GM12878 (cell line): ENCODE measurements at regions of chr19 and their contacts with region 1.

Region 1: GRCh38 chr19:7340959-7341837 is 7.5 kb upstream of the ARHGEF18 start:
- DNase-seq: peak; percentile 92
- ATAC-seq: peak; percentile 17
- H3K4me3 ChIP-seq: 0 out of 2 replicates have a peak overlapping the region, but pooled peaks have one; percentile 1
- H3K27ac ChIP-seq: peak overlapping the region; percentile 80
- H3K4me1 ChIP-seq: peaks cover 67% of the 10 kb centered on the region
- H3K27me3 ChIP-seq: no peaks in the 10 kb centered on the region
- CTCF ChIP-seq: peak; percentile 91 to 96 (median 95)
- EP300 ChIP-seq: peak in 1 of 2 experiments; percentile 36; a peak in 1 of 4 replicates
- POLR2A ChIP-seq: no peak
- RAD21 ChIP-seq: peak; percentile 100

Region 2: GRCh38 chr19:6862673-6863078 is 478.5 kb before region 1 on chr19:
- CTCF ChIA-PET with region 1: interaction called, 9 read pairs
- POLR2A ChIA-PET with region 1: no interaction called
- RAD21 ChIA-PET with region 1: interaction called, 9 read pairs
- SMC1A ChIA-PET with region 1: no interaction called
- in situ Hi-C with region 1: no loop called
- intact Hi-C with region 1: loop called (anchors 2 kb)
- DNase-seq: peak; percentile 80
- ATAC-seq: peak; percentile 94
- H3K4me3 ChIP-seq: peak overlapping the region; percentile 67; the same call in 1 of the 2 replicates
- H3K27ac ChIP-seq: peak overlapping the region; percentile 56; the same call in 1 of the 2 replicates
- H3K4me1 ChIP-seq: peaks cover 11% of the 10 kb centered on the region
- H3K27me3 ChIP-seq: no peaks in the 10 kb centered on the region
- CTCF ChIP-seq: peak; percentile 92 to 99 (median 99); a peak in 5 of 6 replicates
- EP300 ChIP-seq: no peak
- POLR2A ChIP-seq: peak; percentile 65
- RAD21 ChIP-seq: peak; percentile 88

Region 3: GRCh38 chr19:7145494-7146485 is 195.4 kb before region 1 on chr19:
- CTCF ChIA-PET with region 1: interaction called, 10 read pairs
- POLR2A ChIA-PET with region 1: no interaction called
- RAD21 ChIA-PET with region 1: interaction called, 20 read pairs
- SMC1A ChIA-PET with region 1: interaction called, 18 read pairs
- in situ Hi-C with region 1: loop called (anchors 5 kb)
- intact Hi-C with region 1: loop called (anchors 1 kb)
- DNase-seq: no peak
- ATAC-seq: no peak
- H3K4me3 ChIP-seq: no peak overlapping the region
- H3K27ac ChIP-seq: no peak overlapping the region
- H3K4me1 ChIP-seq: no peaks in the 10 kb centered on the region
- H3K27me3 ChIP-seq: no peaks in the 10 kb centered on the region
- CTCF ChIP-seq: no peak
- EP300 ChIP-seq: no peak
- POLR2A ChIP-seq: no peak
- RAD21 ChIP-seq: no peak

Region 4: DNA sequence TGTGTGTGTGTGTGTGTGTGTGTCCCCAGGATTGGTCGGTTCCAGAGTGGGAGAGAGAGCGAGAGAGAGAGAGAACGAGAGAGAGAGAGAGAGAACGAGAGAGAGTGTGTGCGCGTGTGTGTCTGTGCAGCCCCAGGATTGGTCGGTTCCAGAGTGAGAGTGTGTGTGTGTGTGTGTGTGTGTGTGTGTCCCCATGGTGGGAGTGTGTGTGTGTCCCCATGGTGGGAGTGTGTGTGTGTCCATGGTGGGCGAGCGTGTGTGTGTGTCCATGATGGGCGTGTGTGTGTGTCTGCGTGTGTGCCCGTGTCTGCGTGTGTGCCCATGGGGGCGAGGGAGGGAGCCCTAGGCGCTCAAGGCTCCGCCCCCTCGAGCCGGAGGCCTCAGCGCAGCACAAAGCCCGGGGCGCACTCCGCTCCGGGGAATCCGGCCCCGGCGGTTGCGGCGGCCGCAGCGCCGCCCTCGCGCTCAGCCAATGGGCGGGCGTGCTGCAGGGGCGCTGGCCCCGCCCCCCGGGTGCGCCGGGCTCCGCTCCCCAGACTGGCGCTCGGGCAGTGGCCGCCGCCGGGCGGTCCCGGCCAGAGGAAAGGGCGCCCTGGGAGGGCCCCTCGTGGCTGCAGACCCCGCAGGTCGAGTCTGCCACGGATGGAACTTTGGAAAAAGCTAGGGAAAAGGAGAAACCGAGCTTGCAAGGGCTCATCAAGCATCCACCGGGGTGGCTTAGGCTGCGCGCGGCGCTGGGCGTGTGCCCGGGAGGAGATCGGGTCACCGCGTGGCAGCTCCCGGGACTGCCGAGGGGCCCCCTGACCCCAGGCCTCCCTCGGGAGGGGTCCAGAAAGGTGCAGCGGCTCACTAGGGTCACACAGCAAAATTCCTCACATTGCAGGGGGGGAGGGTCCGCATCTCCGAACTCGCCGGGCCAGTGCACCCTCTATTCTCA is 143.2 kb before region 1 on chr19:
- CTCF ChIA-PET with region 1: interaction called, 4 read pairs
- POLR2A ChIA-PET with region 1: interaction called, 4 read pairs
- RAD21 ChIA-PET with region 1: interaction called, 5 read pairs
- SMC1A ChIA-PET with region 1: interaction called, 7 read pairs
- in situ Hi-C with region 1: no loop called
- intact Hi-C with region 1: loop called (anchors 5 kb)
- DNase-seq: peak; percentile 81
- ATAC-seq: peak; percentile 89
- H3K4me3 ChIP-seq: peak overlapping the region; percentile 70
- H3K27ac ChIP-seq: peak overlapping the region; percentile 75
- H3K4me1 ChIP-seq: peaks cover 17% of the 10 kb centered on the region
- H3K27me3 ChIP-seq: no peaks in the 10 kb centered on the region
- CTCF ChIP-seq: peak in 2 of 3 experiments; percentile 26 to 34; a peak in 2 of 6 replicates
- EP300 ChIP-seq: peak; percentile 16 to 52; a peak in 1 of 4 replicates
- POLR2A ChIP-seq: peak; percentile 80
- RAD21 ChIP-seq: peak; percentile 17; the same call in 1 of the 2 replicates

Region 5: DNA sequence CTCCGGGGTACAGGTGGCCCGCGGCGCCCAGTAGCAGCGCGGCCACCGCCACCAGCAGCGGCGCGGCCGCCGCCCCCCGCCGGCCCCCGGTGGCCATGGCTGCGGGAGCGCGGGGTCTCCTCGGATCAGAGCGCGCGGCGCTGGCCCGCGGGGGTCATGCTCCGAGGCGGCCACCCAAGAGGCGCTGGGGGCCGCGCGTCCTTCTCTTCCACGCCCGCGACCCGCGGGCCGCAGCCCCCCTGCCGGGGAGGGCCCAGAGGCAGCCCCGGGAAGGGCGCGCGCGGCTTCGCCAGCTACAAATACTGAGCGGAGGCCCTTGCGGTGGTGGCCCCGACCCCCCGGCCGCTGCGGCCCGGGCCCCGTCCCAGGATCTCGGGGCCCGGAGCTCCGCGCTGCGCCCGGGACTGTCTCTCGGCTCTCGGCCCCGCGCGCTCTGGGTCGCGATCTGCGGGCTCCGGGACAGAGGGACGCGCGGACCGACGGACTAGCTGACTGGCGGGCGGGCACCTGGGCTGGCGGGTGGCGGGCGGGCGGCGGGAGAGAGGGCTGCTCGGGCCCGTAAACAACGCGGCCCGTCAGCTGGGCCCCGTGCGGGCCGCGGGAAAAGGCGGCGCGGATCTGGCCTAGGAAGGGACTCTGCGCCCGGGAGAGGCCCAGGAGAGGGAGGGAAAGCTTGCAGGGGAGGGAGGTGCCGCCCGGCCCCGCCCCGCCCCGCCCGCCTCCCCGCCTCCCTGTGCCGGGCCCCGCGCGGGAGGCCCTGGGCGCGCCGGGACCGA is 47.2 kb before region 1 on chr19 and contains the start of gene INSR:
- CTCF ChIA-PET with region 1: interaction called, 4 read pairs
- POLR2A ChIA-PET with region 1: interaction called, 5 read pairs
- RAD21 ChIA-PET with region 1: interaction called, 5 read pairs
- SMC1A ChIA-PET with region 1: interaction called, 9 read pairs
- in situ Hi-C with region 1: no loop called
- intact Hi-C with region 1: loop called (anchors 2 kb)
- DNase-seq: peak; percentile 54
- ATAC-seq: peak; percentile 82
- H3K4me3 ChIP-seq: peak within 1 kb of the TSS; percentile 94
- H3K27ac ChIP-seq: peak within 1 kb of the TSS; percentile 74
- H3K4me1 ChIP-seq: peaks cover 13% of the 10 kb centered on the region
- H3K27me3 ChIP-seq: no peaks in the 10 kb centered on the region
- CTCF ChIP-seq: no peak
- EP300 ChIP-seq: no peak
- POLR2A ChIP-seq: peak; percentile 66
- RAD21 ChIP-seq: peak; percentile 19; the same call in 1 of the 2 replicates
- polyA plus RNA-seq, gene INSR: 4.2 to 8.0 TPM

Region 6: GRCh38 chr19:7355151-7355820 is 14.1 kb after region 1 on chr19:
- CTCF ChIA-PET with region 1: interaction called, 11 read pairs
- POLR2A ChIA-PET with region 1: interaction called, 4 read pairs
- RAD21 ChIA-PET with region 1: interaction called, 17 read pairs
- SMC1A ChIA-PET with region 1: interaction called, 8 read pairs
- in situ Hi-C with region 1: no loop called
- intact Hi-C with region 1: no loop called
- DNase-seq: no peak
- ATAC-seq: peak; percentile 10; the same call in 2 of the 3 replicates
- H3K4me3 ChIP-seq: no peak overlapping the region
- H3K27ac ChIP-seq: no peak overlapping the region
- H3K4me1 ChIP-seq: peaks cover 11% of the 10 kb centered on the region
- H3K27me3 ChIP-seq: no peaks in the 10 kb centered on the region
- CTCF ChIP-seq: no peak
- EP300 ChIP-seq: no peak
- POLR2A ChIP-seq: no peak
- RAD21 ChIP-seq: no peak